ENCODE measurements at regions of chr5 and their contacts with region 1.

Region 1: DNA sequence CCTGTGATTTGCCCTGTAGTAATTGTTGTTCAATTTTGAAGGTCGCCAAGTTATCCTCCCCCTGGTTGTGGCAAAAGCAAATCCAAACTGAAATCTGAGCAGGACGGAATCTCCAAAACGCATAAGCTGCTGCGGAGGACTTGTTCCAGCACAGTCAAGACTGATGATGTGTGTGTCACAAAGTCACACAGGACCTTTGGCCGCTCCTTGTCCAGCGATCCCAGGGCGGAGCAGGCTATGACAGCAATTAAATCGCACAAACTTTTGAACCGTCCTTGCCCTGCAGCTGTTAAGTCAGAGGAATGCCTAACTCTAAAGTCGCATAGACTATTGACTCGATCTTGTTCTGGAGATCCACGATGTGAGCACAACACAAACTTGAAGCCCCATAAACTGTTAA is 128.4 kb downstream of the PARP8 start:
- DNase-seq: no peak
- ATAC-seq: no peak
- H3K4me3 ChIP-seq: no peak overlapping the region
- H3K27ac ChIP-seq: no peak overlapping the region
- H3K4me1 ChIP-seq: no peaks in the 10 kb centered on the region
- H3K27me3 ChIP-seq: no peaks in the 10 kb centered on the region

Region 2: DNA sequence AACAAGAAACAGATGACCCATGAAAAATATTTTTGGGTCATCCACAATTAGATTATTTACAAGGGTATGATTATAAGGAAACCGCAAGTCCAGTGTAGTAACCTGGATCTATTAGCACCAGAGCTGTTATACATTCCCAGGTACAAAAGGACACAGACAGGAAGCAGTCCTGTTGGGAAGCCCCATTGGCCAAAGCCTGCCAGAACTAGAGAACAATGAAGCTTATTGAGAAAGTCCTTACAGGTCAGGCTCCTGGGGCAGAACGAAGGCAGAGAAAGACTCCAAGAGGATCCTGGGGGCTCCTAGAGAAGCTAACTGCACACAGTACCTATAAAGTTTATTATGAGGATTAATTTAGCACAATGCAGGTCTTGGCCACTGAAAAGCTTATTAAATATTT is 41.5 kb after region 1 on chr5:
- intact Hi-C with region 1: loop called in 1 of 4 experiments (anchors 5 kb)
- DNase-seq: no peak
- ATAC-seq: no peak
- H3K4me3 ChIP-seq: no peak overlapping the region
- H3K27ac ChIP-seq: no peak overlapping the region
- H3K4me1 ChIP-seq: no peaks in the 10 kb centered on the region
- H3K27me3 ChIP-seq: no peaks in the 10 kb centered on the region

Region 3: GRCh38 chr5:51043745-51044144 is 248.9 kb after region 1 on chr5:
- intact Hi-C with region 1: no loop called
- DNase-seq: no peak
- ATAC-seq: no peak
- H3K4me3 ChIP-seq: no peak overlapping the region
- H3K27ac ChIP-seq: no peak overlapping the region
- H3K4me1 ChIP-seq: no peaks in the 10 kb centered on the region
- H3K27me3 ChIP-seq: no peaks in the 10 kb centered on the region